ENCODE measurements at regions of chr12 and their contacts with region 1.

Region 1: GRCh38 chr12:124466216-124467128 is 100.9 kb downstream of the NCOR2 start:
- DNase-seq: peak; percentile 94
- ATAC-seq: peak; percentile 99
- H3K4me3 Mint-ChIP-seq: peak overlapping the region; percentile 61
- H3K27ac Mint-ChIP-seq: peak overlapping the region; percentile 74
- H3K4me1 Mint-ChIP-seq: peaks cover 34% of the 10 kb centered on the region
- H3K27me3 Mint-ChIP-seq: no peaks in the 10 kb centered on the region

Region 2: GRCh38 chr12:124338436-124338835 is 128.0 kb before region 1 on chr12:
- CTCF ChIA-PET with region 1: no interaction called
- POLR2A ChIA-PET with region 1: no interaction called
- intact Hi-C with region 1: no loop called
- DNase-seq: no peak
- ATAC-seq: no peak
- H3K4me3 Mint-ChIP-seq: no peak overlapping the region
- H3K27ac Mint-ChIP-seq: no peak overlapping the region
- H3K4me1 Mint-ChIP-seq: no peaks in the 10 kb centered on the region
- H3K27me3 Mint-ChIP-seq: no peaks in the 10 kb centered on the region

Region 3: DNA sequence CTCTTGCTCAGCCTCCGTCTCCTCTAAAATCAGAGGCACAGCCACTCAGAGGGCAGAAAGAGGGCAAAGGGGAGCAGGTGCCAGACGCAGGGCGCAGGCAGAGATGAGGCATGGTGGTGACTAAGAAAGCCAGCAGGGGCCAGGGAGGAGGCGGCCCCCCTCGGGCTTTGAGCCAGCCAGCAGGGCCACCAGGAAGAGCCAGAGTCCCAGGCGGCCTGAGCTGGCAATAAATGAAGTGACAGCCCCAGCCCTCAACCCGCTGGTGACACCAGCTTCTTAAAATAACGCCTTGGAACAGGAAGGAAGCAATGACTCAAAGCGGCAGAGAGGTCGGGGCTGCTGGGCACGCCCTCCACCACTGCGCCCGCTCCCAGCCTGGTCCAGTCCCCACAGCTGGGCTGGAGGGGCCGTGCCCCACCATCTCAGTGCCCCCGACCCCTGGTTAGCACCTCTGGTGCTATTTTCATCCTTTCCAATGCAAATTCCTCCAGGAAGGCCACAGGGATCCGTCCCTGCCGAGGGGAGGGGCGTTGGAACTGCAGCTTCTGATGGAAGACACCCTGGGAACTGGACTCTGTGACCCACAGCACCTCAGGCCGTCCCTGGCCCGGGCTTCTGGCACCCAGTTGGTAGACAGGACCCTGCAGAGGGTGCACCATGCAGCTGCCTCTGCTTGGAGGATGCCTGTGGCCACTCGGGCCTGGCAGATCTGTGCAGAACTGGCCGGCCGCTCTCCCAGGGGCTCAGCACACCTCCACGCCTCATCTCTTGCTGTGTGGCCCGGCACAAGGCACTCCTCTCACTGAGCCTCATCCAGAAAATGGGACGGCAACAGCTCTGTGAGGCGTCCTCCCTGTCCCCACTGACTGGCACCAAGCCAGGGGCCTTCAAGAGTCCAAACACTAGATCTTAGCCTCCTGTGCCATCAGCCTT is 12.8 kb before region 1 on chr12:
- CTCF ChIA-PET with region 1: interaction called, 6 read pairs
- POLR2A ChIA-PET with region 1: interaction called, 3 read pairs
- intact Hi-C with region 1: loop called (anchors 1 kb)
- DNase-seq: peak; percentile 93
- ATAC-seq: peak; percentile 90
- H3K4me3 Mint-ChIP-seq: peak overlapping the region; percentile 17
- H3K27ac Mint-ChIP-seq: peak overlapping the region; percentile 37
- H3K4me1 Mint-ChIP-seq: peaks cover 64% of the 10 kb centered on the region
- H3K27me3 Mint-ChIP-seq: no peaks in the 10 kb centered on the region

Region 4: DNA sequence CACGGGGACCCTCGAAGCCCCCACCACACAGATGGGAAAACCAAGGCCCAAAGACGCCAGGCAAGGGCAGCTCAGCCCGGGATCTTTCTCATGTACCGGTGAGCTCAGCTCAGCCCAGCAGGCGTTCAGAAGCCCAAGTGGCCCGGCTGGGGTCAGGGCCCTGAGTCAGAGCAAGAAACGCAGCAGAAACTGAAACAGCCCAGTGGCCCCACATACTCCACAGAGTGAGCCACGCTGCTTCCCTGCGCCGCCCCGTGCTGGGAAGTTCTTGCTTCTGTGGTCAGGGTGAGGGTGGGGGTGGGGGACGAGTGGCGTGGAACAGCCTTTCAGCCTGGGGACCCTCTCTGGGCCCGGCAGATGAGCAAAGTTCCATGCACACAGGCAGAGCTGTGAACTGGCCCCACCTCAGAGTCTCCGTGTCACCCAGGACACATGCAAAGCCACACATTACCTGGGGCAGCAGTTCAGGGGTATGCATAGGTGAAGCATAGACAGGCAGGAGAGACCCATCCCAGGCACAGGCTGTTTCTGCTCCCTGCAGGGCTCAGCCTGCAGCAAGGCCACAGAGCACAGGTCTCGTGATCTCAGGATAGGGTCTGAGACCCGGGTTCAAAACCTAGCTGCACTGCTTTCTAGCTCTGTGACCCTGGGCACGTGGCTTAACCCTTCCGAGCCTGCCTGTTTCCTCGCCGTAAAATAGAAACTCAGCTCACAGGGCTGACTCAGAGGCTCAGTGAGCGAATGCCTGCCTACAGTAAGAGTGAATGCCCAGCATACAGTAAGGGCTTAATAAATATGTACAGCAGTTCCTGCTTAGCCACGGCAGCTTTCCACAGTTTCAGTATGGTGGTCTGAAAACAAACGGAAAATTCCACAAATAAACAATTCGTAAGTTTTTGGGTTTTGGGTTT is 79.3 kb after region 1 on chr12:
- CTCF ChIA-PET with region 1: interaction called, 6 read pairs
- POLR2A ChIA-PET with region 1: no interaction called
- intact Hi-C with region 1: loop called in 1 of 2 experiments (anchors 2 kb)
- DNase-seq: peak; percentile 85
- ATAC-seq: peak; percentile 84
- H3K4me3 Mint-ChIP-seq: peak overlapping the region; percentile 31
- H3K27ac Mint-ChIP-seq: peak overlapping the region; percentile 37
- H3K4me1 Mint-ChIP-seq: peaks cover 70% of the 10 kb centered on the region
- H3K27me3 Mint-ChIP-seq: no peaks in the 10 kb centered on the region

Region 5: GRCh38 chr12:124636138-124636978 is 169.9 kb after region 1 on chr12:
- CTCF ChIA-PET with region 1: no interaction called
- POLR2A ChIA-PET with region 1: no interaction called
- intact Hi-C with region 1: loop called in 1 of 2 experiments (anchors 1 kb)
- DNase-seq: peak; percentile 83
- ATAC-seq: peak; percentile 85
- H3K4me3 Mint-ChIP-seq: no peak overlapping the region
- H3K27ac Mint-ChIP-seq: peak overlapping the region; percentile 30
- H3K4me1 Mint-ChIP-seq: peaks cover 16% of the 10 kb centered on the region
- H3K27me3 Mint-ChIP-seq: peaks cover 5% of the 10 kb centered on the region

Region 6: GRCh38 chr12:124759841-124760503 is 293.5 kb after region 1 on chr12:
- CTCF ChIA-PET with region 1: interaction called, 5 read pairs
- POLR2A ChIA-PET with region 1: no interaction called
- intact Hi-C with region 1: loop called in 1 of 2 experiments (anchors 2 kb)
- DNase-seq: no peak
- ATAC-seq: no peak
- H3K4me3 Mint-ChIP-seq: no peak overlapping the region
- H3K27ac Mint-ChIP-seq: no peak overlapping the region
- H3K4me1 Mint-ChIP-seq: peaks cover 35% of the 10 kb centered on the region
- H3K27me3 Mint-ChIP-seq: peaks cover 14% of the 10 kb centered on the region

Region 7: DNA sequence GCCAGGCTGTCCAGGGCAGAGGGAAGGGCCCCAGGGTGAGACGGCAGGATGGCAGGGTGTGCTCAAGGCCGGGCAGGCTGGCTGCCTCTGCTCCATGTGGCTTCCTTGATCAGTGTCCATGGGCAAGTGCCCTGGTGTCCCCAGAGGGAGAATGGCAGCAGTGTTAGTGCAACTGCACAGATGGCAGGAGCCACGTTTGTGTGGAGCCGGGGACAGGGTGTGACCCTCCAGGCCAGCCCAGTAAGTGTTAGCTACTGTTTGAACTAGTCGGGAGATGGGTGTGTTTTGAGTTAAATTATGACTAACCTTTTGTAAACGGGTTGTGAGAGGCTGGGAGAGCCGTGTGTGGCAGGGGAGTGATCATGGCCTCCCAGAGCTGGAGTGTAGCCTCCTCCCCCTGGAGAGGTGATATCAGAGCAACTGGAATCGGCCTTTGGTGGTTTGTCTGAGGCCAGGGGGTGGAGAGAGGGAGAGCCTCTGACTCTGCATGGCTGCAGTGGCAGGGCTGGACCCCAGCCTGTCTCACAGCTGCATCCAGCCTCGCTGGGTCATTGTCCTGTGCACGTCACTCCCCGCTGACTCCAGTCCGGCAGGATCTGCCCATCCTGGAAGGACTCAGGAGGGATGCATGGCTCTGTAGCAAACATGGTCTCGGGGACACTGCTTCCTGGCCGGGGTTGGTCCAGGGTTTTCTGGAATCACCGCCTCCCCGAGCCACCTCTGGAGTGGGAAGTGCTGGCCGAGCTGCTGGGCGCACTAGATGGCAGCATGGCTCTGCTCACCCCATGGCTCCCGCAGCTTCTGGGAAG is 626.6 kb after region 1 on chr12:
- CTCF ChIA-PET with region 1: no interaction called
- POLR2A ChIA-PET with region 1: no interaction called
- intact Hi-C with region 1: no loop called
- DNase-seq: no peak
- ATAC-seq: no peak
- H3K4me3 Mint-ChIP-seq: no peak overlapping the region
- H3K27ac Mint-ChIP-seq: no peak overlapping the region
- H3K4me1 Mint-ChIP-seq: peaks cover 6% of the 10 kb centered on the region
- H3K27me3 Mint-ChIP-seq: no peaks in the 10 kb centered on the region